ENCODE measurements at regions of chr9 and their contacts with region 1.

Region 1: GRCh38 chr9:126704873-126705766 is 91.4 kb downstream of the LMX1B start:
- DNase-seq: peak; percentile 84 to 88
- H3K4me3 ChIP-seq: no peak overlapping the region
- H3K4me3 Mint-ChIP-seq: peak overlapping the region; percentile 61
- H3K27ac Mint-ChIP-seq: peak overlapping the region; percentile 34
- H3K4me1 ChIP-seq: peaks cover 26% of the 10 kb centered on the region
- H3K4me1 Mint-ChIP-seq: peaks cover 14% of the 10 kb centered on the region
- H3K27me3 ChIP-seq: no peaks in the 10 kb centered on the region
- H3K27me3 Mint-ChIP-seq: peaks cover 10% of the 10 kb centered on the region
- CTCF ChIP-seq: peak; percentile 82 to 89

Region 2: DNA sequence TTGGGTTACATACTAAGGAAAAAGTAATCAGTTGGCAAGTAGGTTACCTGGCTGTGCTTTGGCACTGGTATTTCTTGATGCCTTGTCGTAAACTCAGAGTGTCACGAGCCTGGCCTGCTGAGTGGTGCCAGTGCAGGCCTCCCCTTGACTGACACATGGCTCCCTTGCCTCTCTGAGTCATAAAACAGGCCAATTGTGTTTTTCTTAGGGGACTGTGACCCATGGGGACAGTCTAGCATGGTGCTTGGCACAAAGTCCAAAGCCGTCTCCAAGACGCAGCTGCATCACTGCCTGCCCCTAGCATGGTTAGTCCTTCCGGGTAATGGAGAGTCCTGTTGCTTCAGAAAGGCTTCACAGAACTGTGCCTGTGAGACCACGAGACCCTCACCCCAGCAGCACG is 246.0 kb before region 1 on chr9:
- CTCF ChIA-PET with region 1: no interaction called
- POLR2A ChIA-PET with region 1: no interaction called
- intact Hi-C with region 1: no loop called
- DNase-seq: no peak
- H3K4me3 ChIP-seq: no peak overlapping the region
- H3K4me3 Mint-ChIP-seq: no peak overlapping the region
- H3K27ac Mint-ChIP-seq: no peak overlapping the region
- H3K4me1 ChIP-seq: no peaks in the 10 kb centered on the region
- H3K4me1 Mint-ChIP-seq: no peaks in the 10 kb centered on the region
- H3K27me3 ChIP-seq: no peaks in the 10 kb centered on the region
- H3K27me3 Mint-ChIP-seq: no peaks in the 10 kb centered on the region
- CTCF ChIP-seq: no peak

Region 3: GRCh38 chr9:126636983-126637798 is 67.9 kb before region 1 on chr9:
- CTCF ChIA-PET with region 1: no interaction called
- POLR2A ChIA-PET with region 1: no interaction called
- intact Hi-C with region 1: no loop called
- DNase-seq: no peak
- H3K4me3 ChIP-seq: no peak overlapping the region
- H3K4me3 Mint-ChIP-seq: no peak overlapping the region
- H3K27ac Mint-ChIP-seq: no peak overlapping the region
- H3K4me1 ChIP-seq: peaks cover 18% of the 10 kb centered on the region
- H3K4me1 Mint-ChIP-seq: peaks cover 15% of the 10 kb centered on the region
- H3K27me3 ChIP-seq: no peaks in the 10 kb centered on the region
- H3K27me3 Mint-ChIP-seq: no peaks in the 10 kb centered on the region
- CTCF ChIP-seq: no peak

Region 4: GRCh38 chr9:126722252-126723078 is 17.3 kb after region 1 on chr9:
- CTCF ChIA-PET with region 1: interaction called, 9 read pairs
- POLR2A ChIA-PET with region 1: no interaction called
- intact Hi-C with region 1: loop called (anchors 1 kb)
- DNase-seq: peak; percentile 84
- H3K4me3 ChIP-seq: peak overlapping the region; percentile 52
- H3K4me3 Mint-ChIP-seq: peak overlapping the region; percentile 76
- H3K27ac Mint-ChIP-seq: peak overlapping the region; percentile 25
- H3K4me1 ChIP-seq: 0 out of 2 replicates have a peak, but pooled peaks cover 4% of the 10 kb centered on the region
- H3K4me1 Mint-ChIP-seq: peaks cover 6% of the 10 kb centered on the region
- H3K27me3 ChIP-seq: no peaks in the 10 kb centered on the region
- H3K27me3 Mint-ChIP-seq: peaks cover 15% of the 10 kb centered on the region
- CTCF ChIP-seq: no peak

Region 5: DNA sequence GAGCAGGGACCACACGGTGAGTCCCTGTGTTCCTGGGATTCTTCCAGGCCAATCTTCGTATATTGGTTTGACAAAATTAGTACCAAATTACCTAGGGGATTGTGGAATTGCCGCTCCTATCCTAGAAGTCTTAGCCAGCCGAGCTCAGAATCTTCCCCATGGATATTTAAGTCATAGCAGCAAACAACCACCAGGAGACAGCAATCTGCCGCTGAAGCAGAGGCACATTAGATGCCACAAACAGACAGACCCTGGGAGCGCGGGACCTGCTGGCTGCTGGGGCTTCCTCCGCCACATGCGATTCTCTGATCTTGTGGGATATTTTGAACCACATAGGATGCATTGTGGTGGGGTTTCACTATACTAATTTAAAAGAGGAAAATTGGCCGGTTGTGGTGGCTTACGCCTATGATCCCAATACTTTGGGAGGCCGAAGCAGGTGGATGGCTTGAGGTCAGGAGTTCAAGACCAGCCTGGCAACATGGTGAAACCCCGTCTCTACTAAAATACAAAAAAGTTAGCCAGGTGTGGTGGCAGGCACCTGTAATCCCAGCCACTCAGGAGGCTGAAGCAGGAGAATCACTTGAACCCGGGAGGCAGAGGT is 68.0 kb after region 1 on chr9:
- CTCF ChIA-PET with region 1: interaction called, 24 read pairs
- POLR2A ChIA-PET with region 1: no interaction called
- intact Hi-C with region 1: no loop called
- DNase-seq: peak; percentile 42 to 45
- H3K4me3 ChIP-seq: no peak overlapping the region
- H3K4me3 Mint-ChIP-seq: no peak overlapping the region
- H3K27ac Mint-ChIP-seq: no peak overlapping the region
- H3K4me1 ChIP-seq: no peaks in the 10 kb centered on the region
- H3K4me1 Mint-ChIP-seq: no peaks in the 10 kb centered on the region
- H3K27me3 ChIP-seq: no peaks in the 10 kb centered on the region
- H3K27me3 Mint-ChIP-seq: peaks cover 8% of the 10 kb centered on the region
- CTCF ChIP-seq: peak; percentile 71 to 74

Region 6: DNA sequence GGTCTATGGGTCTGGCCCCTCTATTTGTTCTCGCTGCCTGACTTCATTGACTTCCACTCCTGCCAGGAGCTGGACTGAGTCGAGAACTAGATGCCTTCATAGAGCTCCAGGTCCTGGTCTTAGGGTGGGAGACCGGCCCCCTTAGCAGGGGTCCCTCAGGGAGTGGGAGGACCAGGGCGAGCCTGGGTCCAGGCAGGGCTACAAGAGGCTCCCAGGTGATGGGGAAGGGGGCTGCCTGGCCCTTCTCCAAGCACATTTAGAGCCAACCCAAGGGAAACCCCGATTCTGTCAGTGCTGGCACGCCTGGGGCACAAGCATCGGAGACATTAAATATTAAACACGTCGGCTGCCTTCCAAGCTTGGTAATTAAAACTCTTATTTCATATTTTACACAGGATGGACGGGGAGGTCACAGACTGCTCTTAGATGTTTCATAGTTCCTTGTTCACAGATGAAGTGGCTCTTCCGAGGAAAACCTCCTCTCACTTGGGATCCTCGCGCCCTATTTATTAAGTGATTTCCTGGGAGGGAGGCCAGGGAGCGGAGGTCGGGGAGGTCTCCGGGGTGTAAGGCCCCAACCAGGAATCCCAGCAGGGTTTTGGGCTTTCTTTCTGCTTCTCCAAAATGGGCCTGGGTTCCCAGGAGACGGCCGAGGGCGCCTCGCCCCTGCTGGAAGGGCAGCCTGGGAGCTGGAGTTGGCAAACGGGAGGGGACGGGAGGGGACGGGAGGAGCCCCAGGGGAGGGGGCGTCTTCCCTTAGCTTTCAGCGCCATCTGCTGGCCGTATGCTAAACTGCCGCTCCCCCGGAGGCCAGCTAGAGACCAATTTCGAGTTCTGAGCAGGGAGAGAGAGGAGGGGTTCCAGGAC is 76.3 kb after region 1 on chr9:
- CTCF ChIA-PET with region 1: interaction called, 227 read pairs
- POLR2A ChIA-PET with region 1: interaction called, 4 read pairs
- intact Hi-C with region 1: loop called (anchors 1 kb)
- DNase-seq: peak; percentile 86 to 93
- H3K4me3 ChIP-seq: no peak overlapping the region
- H3K4me3 Mint-ChIP-seq: peak overlapping the region; percentile 48
- H3K27ac Mint-ChIP-seq: no peak overlapping the region
- H3K4me1 ChIP-seq: no peaks in the 10 kb centered on the region
- H3K4me1 Mint-ChIP-seq: no peaks in the 10 kb centered on the region
- H3K27me3 ChIP-seq: no peaks in the 10 kb centered on the region
- H3K27me3 Mint-ChIP-seq: no peaks in the 10 kb centered on the region
- CTCF ChIP-seq: peak; percentile 95 to 96

Region 7: GRCh38 chr9:127122176-127123063 is 417.3 kb after region 1 on chr9 and contains the start of gene ANGPTL2:
- CTCF ChIA-PET with region 1: no interaction called
- POLR2A ChIA-PET with region 1: no interaction called
- intact Hi-C with region 1: loop called (anchors 5 kb)
- DNase-seq: no peak
- H3K4me3 ChIP-seq: no peak within 1 kb of the TSS
- H3K4me3 Mint-ChIP-seq: no peak within 1 kb of the TSS
- H3K27ac Mint-ChIP-seq: peak within 1 kb of the TSS; percentile 49
- H3K4me1 ChIP-seq: peaks cover 7% of the 10 kb centered on the region; the same call in 1 of the 2 replicates
- H3K4me1 Mint-ChIP-seq: peaks cover 22% of the 10 kb centered on the region
- H3K27me3 ChIP-seq: no peaks in the 10 kb centered on the region
- H3K27me3 Mint-ChIP-seq: no peaks in the 10 kb centered on the region
- CTCF ChIP-seq: no peak
- total RNA-seq, gene ANGPTL2: not detected in 2 replicates

Measured in Caco-2 (cell line).